Naive thymus-derived CD4-positive, alpha-beta T cell (primary cell): ENCODE measurements at regions of chr1 and their contacts with region 1.

Region 1: GRCh38 chr1:206808615-206809014 is 36.3 kb upstream of the IL10 start:
- DNase-seq: peak in 7 of 9 donors; percentile 47 to 71 (median 58)
- ATAC-seq: peak; percentile 90
- H3K4me3 ChIP-seq: no peak overlapping the region
- H3K4me3 Mint-ChIP-seq: peak overlapping the region in 1 of 10 donors; percentile 8
- H3K27ac ChIP-seq: no peak overlapping the region
- H3K27ac Mint-ChIP-seq: peak overlapping the region in 8 of 9 donors; percentile 17 to 76 (median 51)
- H3K4me1 ChIP-seq: peaks cover 30 to 42% of the 10 kb centered on the region in 2 donors
- H3K4me1 Mint-ChIP-seq: peaks cover 24 to 61% (median 52%) of the 10 kb centered on the region in 7 donors
- H3K27me3 ChIP-seq: no peaks in the 10 kb centered on the region
- H3K27me3 Mint-ChIP-seq: peaks cover 0 to 12% (median 0%) of the 10 kb centered on the region in 5 donors

Region 2: DNA sequence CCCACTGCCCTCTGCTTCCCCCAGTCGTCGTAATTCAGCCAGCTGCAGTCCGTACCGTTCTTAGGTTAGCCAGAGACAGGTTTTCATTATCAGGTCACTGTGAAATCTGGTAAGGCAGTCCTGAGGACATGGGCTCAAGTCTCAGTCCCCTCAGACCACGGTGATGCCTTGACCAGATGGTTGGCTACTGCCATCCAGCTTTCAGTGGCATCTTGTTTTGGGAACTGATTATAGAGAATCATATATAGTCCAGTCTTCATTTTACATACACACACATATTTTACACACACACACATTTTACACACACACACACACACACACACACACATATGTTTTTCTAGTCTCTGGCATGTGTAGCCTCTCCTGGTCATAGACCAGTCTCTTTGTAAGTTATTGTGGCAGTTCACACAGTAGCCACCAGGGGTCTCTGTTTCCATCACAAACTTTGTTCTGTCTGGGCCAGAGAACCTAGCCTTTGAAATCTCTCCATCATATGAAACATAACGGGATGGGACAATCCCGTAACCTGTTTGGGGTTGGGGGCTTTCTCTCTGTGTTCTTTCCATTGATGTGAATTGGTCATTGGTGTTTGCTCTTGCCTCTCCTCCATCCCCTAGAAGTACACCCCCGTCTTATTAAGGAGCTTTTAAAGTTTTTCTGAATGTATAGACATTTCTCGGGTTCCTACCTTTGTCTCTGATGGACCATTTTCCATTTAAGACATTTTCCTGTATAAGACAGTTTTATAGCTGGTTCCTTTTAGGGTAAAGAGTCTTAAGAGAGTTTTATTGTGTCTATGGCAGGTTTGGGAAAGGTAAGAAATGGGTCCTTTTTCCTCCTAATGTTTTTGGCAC is 346.8 kb before region 1 on chr1:
- CTCF ChIA-PET with region 1: no interaction called
- POLR2A ChIA-PET with region 1: no interaction called
- intact Hi-C with region 1: no loop called
- DNase-seq: peak in 8 of 9 donors; percentile 59 to 72 (median 66)
- ATAC-seq: peak; percentile 84
- H3K4me3 ChIP-seq: no peak overlapping the region
- H3K4me3 Mint-ChIP-seq: peak overlapping the region in 1 of 10 donors; percentile 38
- H3K27ac ChIP-seq: no peak overlapping the region
- H3K27ac Mint-ChIP-seq: peak overlapping the region in 1 of 9 donors; percentile 38
- H3K4me1 ChIP-seq: peaks cover 10 to 16% of the 10 kb centered on the region in 2 donors
- H3K4me1 Mint-ChIP-seq: peaks cover 20 to 48% (median 31%) of the 10 kb centered on the region in 7 donors
- H3K27me3 ChIP-seq: no peaks in the 10 kb centered on the region
- H3K27me3 Mint-ChIP-seq: no peaks in the 10 kb centered on the region

Region 3: DNA sequence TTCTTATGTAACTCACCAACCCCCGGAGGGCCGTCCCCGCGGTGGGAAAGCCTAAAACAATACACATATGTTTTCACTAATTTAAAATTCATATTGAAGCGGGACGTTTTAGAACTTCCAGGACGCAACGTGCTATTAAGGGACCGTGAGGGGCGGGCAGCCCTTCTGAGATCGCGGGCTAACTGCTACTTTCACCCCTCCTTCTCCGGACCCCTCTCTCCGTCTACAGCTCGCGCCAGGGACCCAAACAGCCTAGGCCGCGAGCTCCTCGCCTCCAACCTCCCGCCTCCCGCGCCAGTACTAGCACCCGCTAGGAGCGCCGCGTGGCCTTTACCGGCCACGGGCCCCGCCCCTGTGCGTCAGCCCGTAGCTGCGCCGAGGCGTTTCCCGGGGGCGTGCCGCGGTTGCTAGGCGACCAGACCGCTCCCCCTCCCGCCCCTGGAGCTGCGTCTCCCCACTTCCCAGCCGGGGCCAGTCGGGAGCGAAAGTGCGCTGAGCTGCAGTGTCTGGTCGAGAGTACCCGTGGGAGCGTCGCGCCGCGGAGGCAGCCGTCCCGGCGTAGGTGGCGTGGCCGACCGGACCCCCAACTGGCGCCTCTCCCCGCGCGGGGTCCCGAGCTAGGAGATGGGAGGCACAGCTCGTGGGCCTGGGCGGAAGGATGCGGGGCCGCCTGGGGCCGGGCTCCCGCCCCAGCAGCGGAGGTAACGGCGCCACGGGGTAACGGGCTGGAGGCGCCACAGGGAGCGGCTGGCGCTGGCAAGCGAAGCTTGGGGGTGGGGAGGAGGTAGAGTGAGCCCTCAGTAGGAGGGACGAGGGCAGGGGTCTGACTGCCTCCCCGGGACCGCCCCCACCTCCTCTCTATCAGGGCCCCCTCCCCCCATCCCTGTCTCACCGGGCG is 173.3 kb before region 1 on chr1 and contains the start of gene DYRK3:
- CTCF ChIA-PET with region 1: interaction called, 3 read pairs
- POLR2A ChIA-PET with region 1: no interaction called
- intact Hi-C with region 1: loop called in 1 of 2 experiments (anchors 1 kb)
- DNase-seq: peak; percentile 71 to 98 (median 80)
- ATAC-seq: peak; percentile 97
- H3K4me3 ChIP-seq: peak within 1 kb of the TSS; percentile 67
- H3K4me3 Mint-ChIP-seq: peak within 1 kb of the TSS; percentile 85 to 96 (median 90)
- H3K27ac ChIP-seq: peak within 1 kb of the TSS; percentile 57
- H3K27ac Mint-ChIP-seq: peak within 1 kb of the TSS; percentile 64 to 93 (median 85)
- H3K4me1 ChIP-seq: peaks cover 8 to 16% of the 10 kb centered on the region in 2 donors
- H3K4me1 Mint-ChIP-seq: peaks cover 14 to 29% (median 18%) of the 10 kb centered on the region in 7 donors
- H3K27me3 ChIP-seq: no peaks in the 10 kb centered on the region
- H3K27me3 Mint-ChIP-seq: peaks cover 7 to 13% (median 9%) of the 10 kb centered on the region in 5 donors
- total RNA-seq, gene DYRK3: 0.22 to 8.2 (median 0.69) TPM

Region 4: DNA sequence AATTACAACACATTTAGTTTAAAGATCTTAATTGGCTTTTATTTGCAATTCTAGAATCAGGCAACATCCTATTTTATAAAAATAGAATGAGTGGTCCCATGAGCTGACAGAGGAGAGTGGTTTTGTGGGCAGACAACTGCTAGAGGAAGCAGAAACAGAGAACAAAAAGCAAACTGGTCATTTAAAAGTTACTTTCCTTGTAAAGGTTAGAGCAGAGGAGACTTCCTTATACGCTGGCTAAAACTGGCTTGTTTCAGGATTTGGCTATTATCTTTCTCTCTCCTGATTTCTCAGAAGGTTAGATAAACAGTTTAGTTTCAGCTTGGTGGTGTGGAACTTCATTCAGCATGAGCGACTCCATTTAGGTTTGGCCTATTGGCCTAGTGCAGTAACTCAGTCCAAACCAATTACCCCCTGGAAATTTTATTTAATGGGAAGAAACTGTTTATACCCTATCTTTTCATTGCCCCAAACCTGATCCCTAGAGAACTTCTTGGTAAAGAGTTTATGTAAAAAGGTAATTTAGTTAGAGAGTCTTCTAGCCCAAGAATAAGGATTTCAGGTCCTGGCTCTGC is 24.6 kb after region 1 on chr1:
- CTCF ChIA-PET with region 1: interaction called, 7 read pairs
- POLR2A ChIA-PET with region 1: interaction called, 6 read pairs
- intact Hi-C with region 1: loop called in 1 of 2 experiments (anchors 2 kb)
- DNase-seq: no peak
- ATAC-seq: no peak
- H3K4me3 ChIP-seq: no peak overlapping the region
- H3K4me3 Mint-ChIP-seq: no peak overlapping the region
- H3K27ac ChIP-seq: no peak overlapping the region
- H3K27ac Mint-ChIP-seq: no peak overlapping the region
- H3K4me1 ChIP-seq: peaks cover 18 to 22% of the 10 kb centered on the region in 2 donors
- H3K4me1 Mint-ChIP-seq: peaks cover 24 to 51% (median 39%) of the 10 kb centered on the region in 7 donors
- H3K27me3 ChIP-seq: no peaks in the 10 kb centered on the region
- H3K27me3 Mint-ChIP-seq: peaks cover 0 to 51% (median 5%) of the 10 kb centered on the region in 5 donors

Region 5: DNA sequence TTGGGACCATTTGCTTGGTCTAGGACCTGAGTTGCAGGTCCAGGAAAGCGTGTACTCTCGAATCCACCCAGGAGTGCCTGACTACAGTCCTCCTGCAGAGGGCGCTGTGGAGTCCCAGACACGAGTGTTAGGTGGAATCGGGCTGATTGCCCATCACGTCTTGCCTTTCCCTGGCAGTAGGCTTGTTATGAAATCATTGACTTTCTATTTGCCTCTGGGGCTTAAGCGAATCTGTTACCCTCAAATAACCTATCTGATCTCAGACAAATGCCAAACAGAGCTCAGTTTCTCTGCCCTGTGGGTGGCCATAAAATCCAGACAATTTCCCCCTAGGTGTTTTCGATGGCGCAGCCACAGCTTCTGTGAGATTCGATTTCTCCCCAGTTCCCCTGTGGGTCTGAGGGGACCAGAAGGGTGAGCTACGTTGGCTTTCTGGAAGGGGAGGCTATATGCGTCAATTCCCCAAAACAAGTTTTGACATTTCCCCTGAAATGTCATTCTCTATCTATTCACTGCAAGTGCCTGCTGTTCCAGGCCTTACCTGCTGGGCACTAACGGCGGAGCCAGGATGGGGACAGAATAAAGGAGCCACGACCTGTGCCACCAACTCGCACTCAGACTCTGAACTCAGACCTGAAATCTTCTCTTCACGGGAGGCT is 56.5 kb after region 1 on chr1 and contains the start of gene IL20:
- CTCF ChIA-PET with region 1: interaction called, 7 read pairs
- POLR2A ChIA-PET with region 1: no interaction called
- intact Hi-C with region 1: loop called in 1 of 2 experiments (anchors 1 kb)
- DNase-seq: peak; percentile 71 to 92 (median 84)
- ATAC-seq: peak; percentile 97
- H3K4me3 ChIP-seq: no peak within 1 kb of the TSS
- H3K4me3 Mint-ChIP-seq: peak within 1 kb of the TSS in 2 of 10 donors; percentile 3 to 5
- H3K27ac ChIP-seq: no peak within 1 kb of the TSS
- H3K27ac Mint-ChIP-seq: peak within 1 kb of the TSS in 6 of 9 donors; percentile 7 to 53 (median 28)
- H3K4me1 ChIP-seq: no peaks in the 10 kb centered on the region
- H3K4me1 Mint-ChIP-seq: peaks cover 3 to 16% (median 7%) of the 10 kb centered on the region in 7 donors
- H3K27me3 ChIP-seq: no peaks in the 10 kb centered on the region
- H3K27me3 Mint-ChIP-seq: peaks cover 0 to 56% (median 0%) of the 10 kb centered on the region in 5 donors
- total RNA-seq, gene IL20: not detected

Region 6: GRCh38 chr1:207077470-207078377 is 269.1 kb after region 1 on chr1:
- CTCF ChIA-PET with region 1: no interaction called
- POLR2A ChIA-PET with region 1: no interaction called
- intact Hi-C with region 1: loop called in 1 of 2 experiments (anchors 2 kb)
- DNase-seq: peak; percentile 21 to 85 (median 78)
- ATAC-seq: peak; percentile 98
- H3K4me3 ChIP-seq: no peak overlapping the region
- H3K4me3 Mint-ChIP-seq: no peak overlapping the region
- H3K27ac ChIP-seq: no peak overlapping the region
- H3K27ac Mint-ChIP-seq: peak overlapping the region in 3 of 9 donors; percentile 5 to 63 (median 28)
- H3K4me1 ChIP-seq: no peaks in the 10 kb centered on the region
- H3K4me1 Mint-ChIP-seq: peaks cover 0 to 14% (median 5%) of the 10 kb centered on the region in 7 donors
- H3K27me3 ChIP-seq: no peaks in the 10 kb centered on the region
- H3K27me3 Mint-ChIP-seq: peaks cover 0 to 52% (median 0%) of the 10 kb centered on the region in 5 donors